Activated CD4-positive, alpha-beta T cell treated with anti-CD3 and anti-CD28 coated beads, Interleukin-2, amount 10 ng/mL, durations not matched to agents 24 days and 14 days (primary cell): ENCODE measurements at regions of chrX and their contacts with region 1.

Region 1: GRCh38 chrX:152930516-152930915 is 32.6 kb downstream of the ZNF185 start:
- DNase-seq: no peak
- H3K4me3 Mint-ChIP-seq: no peak overlapping the region
- H3K27ac Mint-ChIP-seq: no peak overlapping the region
- H3K4me1 Mint-ChIP-seq: peaks cover 3% of the 10 kb centered on the region
- H3K27me3 Mint-ChIP-seq: no peaks in the 10 kb centered on the region

Region 2: DNA sequence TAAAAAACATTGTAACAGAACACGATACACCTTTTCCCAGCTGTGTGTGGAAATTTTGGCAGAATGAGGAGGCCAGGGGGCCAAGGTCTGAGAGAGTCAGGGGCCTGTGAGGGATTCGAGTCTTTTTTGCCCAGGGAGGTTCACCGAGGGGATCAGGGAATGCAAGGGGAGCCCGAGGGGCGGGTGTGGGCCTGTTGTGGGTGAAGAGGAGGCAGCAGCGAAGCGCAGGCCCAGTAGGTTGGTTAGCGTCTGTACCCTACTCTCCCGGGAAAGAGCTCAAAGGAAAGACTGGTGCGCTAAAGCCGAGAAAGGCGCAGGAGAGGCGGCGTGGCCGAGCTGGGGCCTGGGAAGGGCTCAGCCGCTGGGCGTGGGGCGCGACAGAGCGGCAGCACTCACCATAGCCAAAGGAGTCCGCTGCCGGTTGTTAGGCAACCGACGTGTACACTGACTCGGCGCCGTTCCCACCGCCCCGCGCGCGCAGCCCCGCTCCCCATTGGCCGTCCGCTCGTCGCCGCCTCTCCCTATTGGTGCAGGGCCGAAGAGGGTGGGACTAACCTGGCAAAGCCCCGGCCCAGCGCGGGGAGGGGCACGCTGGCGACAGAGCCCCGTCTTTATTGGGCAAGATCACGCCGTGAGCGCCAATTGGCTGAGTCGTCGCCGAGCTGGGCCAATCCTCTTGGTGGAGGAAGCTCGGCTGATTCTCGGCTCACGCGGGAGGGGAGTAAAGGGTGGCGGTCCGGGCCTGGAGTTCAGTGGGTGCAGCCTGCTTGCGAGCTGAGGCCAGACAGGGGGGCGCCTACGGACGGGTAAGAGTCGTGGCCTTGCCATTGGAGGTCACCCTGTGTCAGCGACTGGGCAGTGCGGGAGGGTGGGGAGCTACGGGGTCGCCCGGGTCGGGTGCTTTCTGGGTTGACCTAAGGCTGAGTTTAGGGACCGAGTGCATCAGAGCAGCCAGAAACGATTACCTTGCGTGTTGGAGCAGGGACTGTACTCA is 99.9 kb before region 1 on chrX and contains the starts of genes CETN2 and NSDHL:
- intact Hi-C with region 1: loop called (anchors 5 kb)
- DNase-seq: peak; percentile 98
- H3K4me3 Mint-ChIP-seq: peak within 1 kb of the TSS; percentile 92
- H3K27ac Mint-ChIP-seq: peak within 1 kb of the TSS; percentile 92
- H3K4me1 Mint-ChIP-seq: peaks cover 14% of the 10 kb centered on the region
- H3K27me3 Mint-ChIP-seq: no peaks in the 10 kb centered on the region
- total RNA-seq, gene CETN2: 11.3 and 12.4 TPM in 2 replicates
- total RNA-seq, gene NSDHL: 22.3 and 23.4 TPM in 2 replicates